Cardiac septum (tissue), 1 donor: ENCODE measurements at regions of chr9 and their contacts with region 1.

Region 1: GRCh38 chr9:77751341-77752091 is 103.4 kb upstream of the GNA14 start:
- DNase-seq: no peak

Region 2: DNA sequence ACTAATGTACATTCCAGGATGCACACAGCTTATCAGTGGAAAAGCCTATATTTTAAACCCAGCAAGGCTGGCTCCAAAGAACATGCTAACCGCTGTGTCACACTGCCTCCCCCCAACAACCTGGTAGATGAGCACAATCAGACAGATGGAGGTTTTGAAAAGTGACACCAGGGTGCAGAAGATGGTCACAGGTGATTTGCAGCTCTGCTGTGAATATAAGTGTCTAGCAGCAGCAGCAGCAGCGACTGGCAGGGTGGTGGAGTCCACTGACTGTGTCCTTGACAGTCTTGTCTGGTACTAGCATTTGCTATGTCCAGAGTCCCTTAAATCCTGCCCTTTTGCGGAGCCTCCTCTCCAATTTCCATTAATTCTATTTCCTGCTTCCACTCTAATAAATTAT is 112.1 kb before region 1 on chr9:
- intact Hi-C with region 1: no loop called
- DNase-seq: no peak

Region 3: DNA sequence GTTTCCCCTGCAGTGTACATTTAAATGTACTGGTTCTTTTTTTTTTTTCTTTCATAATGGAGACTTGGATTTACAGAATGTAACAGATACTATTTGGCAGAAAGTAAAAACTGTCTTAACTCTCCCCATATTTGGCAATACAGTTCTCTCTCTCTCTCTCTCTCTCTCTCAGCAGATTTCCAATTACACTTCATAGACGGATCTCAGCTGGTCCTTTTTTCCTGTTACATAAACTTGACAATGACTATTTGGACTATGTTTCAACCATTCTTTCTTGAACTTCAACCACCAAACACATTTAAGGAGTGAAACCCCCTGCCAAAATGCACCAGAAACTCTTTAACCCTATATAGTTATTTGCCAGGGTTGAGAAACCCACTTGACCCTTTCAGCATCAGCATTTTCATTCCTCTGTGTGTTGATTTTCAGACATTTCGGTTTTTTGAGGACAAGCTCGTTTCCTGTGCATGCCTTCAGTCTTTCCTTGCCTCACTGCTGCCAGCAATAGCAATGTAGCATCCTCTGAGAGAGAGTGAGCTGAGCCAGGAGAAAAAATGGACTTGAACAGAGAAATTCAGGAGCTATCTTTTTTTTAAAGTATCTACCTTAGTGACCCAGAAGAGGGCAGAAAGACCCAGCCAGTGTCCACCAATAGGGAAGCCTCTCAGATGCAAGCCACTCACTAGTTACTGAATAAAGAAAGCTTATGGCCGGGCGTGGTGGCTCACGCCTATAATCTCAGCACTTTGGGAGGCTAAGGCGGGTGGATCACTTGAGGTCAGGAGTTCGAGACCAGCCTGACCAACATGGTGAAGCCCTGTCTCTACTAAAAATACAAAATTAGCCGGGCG is 77.3 kb before region 1 on chr9:
- intact Hi-C with region 1: loop called (anchors 10 kb)
- DNase-seq: no peak